Kidney (tissue), 22 donors: ENCODE measurements at regions of chr10 and their contacts with region 1.

Region 1: DNA sequence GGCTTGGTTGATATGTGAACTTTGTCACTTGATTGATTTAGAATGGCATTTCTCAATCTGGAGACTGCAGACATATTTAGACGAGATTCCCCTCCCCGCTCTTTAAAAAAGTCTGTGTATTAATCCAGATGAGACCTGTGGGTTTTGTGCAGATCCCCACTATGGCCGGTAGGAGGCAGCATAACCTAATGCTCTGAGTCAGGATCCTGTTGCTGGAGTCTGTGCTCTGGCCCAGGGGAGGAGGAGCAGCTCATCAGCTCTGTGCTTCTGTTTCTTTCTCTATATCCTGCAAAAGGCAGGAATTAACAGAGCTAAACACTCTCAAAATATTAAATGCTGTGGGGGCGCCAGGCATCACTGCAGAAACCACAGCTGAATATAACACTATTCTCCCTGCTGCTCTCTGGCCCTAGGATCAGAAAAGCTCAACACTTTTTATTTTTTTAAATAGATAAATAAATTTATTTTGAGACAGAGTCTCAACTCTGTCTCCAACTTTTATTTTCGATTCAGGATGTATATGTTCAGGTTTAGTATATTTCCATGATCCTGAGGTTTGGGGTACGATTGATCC is 23.9 kb upstream of the SEPHS1 start:
- DNase-seq: peak in 4 of 5 donors; percentile 86 to 97 (median 90)
- H3K4me3 ChIP-seq: no peak overlapping the region
- H3K27ac ChIP-seq: no peak overlapping the region
- H3K4me1 ChIP-seq: no peaks in the 10 kb centered on the region
- H3K27me3 ChIP-seq: no peaks in the 10 kb centered on the region
- CTCF ChIP-seq: peak; percentile 88

Region 2: GRCh38 chr10:13536674-13537366 is 164.8 kb after region 1 on chr10:
- intact Hi-C with region 1: loop called (anchors 10 kb)
- DNase-seq: peak; percentile 78 to 91 (median 88)
- H3K4me3 ChIP-seq: no peak overlapping the region
- H3K27ac ChIP-seq: no peak overlapping the region
- H3K4me1 ChIP-seq: no peaks in the 10 kb centered on the region
- H3K27me3 ChIP-seq: no peaks in the 10 kb centered on the region
- CTCF ChIP-seq: peak; percentile 66